ENCODE measurements at regions of chr6 and their contacts with region 1.

Region 1: DNA sequence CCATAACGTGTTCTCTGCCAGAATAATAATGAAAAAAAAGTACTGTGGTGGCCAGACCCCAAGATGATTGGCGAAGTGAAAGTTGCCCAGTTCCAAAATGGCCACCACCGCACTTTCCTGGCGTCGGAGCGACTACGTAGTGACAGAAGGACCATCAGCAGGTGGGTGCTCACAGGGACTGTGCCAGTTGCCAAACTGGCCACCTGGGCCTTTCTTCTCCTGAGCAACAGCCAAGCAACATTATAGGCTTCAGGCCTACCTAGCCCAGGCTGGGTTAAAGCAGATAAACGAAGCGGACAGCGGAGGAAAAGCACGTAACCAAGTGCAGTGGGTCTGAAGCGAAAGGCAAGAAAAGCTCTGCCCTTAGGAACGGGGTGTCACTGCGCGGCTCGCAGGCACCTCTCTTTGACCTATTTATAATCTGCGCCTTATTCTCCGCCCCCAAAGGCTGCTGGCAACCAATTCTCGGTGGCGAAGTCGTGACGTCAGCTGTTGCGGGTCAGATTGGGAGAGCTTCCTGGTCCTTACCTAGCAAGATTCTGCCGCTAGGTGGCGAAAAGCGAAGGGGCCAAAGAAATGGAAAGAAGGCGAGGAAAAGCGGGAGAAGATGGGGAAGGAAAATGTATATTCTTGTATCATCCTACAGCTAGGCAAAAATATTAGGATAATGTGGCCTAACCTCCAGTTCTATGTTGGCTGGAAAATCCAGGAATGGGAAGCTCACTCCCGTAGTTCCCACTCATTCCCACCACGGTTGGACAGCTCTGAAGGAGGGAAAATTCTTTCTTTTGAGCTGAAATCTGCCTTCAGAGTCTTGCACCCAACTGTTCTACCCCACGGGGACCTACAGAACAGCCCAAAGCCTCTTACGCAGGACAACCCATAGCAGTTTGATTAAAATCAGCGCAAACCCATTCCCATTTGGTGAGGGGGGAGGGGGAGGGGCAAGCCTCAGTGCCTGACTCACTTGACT is 6.9 kb upstream of the MOG start:
- DNase-seq: peak; percentile 94 to 99
- H3K4me3 ChIP-seq: peak overlapping the region; percentile 29 to 66 (median 56); a peak in 7 of 8 replicates
- H3K27ac ChIP-seq: peak overlapping the region; percentile 69; the same call in 1 of the 2 replicates
- H3K4me1 ChIP-seq: peaks cover 3 to 17% (median 10%) of the 10 kb centered on the region in 4 experiments; a peak in 6 of 7 replicates
- H3K27me3 ChIP-seq: no peaks in the 10 kb centered on the region
- CTCF ChIP-seq: peak; percentile 69 to 94 (median 74)
- EP300 ChIP-seq: no peak
- POLR2A ChIP-seq: peak in 1 of 2 experiments; percentile 93; a peak in 2 of 3 replicates
- RAD21 ChIP-seq: peak; percentile 52 to 53

Region 2: DNA sequence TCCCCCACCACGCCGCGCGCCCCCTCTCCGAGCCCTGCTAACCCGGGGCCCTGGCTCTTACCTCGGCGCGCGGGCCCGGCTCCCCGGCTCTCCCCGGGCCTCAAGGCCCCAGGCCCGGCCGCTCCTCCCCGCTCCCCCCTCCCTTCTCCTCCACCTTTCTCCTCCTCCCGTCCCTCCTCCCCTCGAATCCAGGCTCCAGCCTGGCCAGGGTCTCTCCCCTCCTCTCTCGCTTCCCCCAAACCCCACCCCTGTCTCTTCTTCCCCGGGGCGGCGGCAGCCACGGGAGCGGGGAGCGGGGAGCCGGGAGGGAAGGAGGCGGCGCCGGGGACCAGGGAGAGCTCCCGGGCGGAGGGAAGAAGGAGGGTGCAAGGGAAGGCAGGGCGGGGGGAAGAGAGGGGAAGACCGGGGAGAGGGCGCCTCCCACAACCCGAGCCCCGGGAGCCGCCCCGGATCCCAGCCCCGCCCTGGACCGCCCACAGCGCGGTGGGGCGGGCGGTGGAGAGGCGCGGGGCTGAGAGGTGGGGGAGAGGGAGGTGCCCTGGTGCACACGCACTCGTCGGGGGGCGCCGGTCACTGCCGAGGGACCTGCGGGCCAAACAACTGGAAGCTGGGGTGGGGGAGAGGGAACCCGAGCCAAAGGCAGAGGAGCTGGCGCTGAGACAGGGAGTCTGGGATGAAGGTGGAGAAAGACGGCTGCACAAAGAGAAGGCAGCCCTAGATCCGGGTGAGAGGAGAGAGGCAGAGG is 17.0 kb before region 1 on chr6 and contains the start of gene GABBR1:
- CTCF ChIA-PET with region 1: interaction called, 658 read pairs
- POLR2A ChIA-PET with region 1: interaction called, 14 read pairs
- DNase-seq: peak in 1 of 2 experiments; percentile 91
- H3K4me3 ChIP-seq: peak within 1 kb of the TSS; percentile 68 to 84 (median 76)
- H3K27ac ChIP-seq: peak within 1 kb of the TSS; percentile 53; the same call in 1 of the 2 replicates
- H3K4me1 ChIP-seq: peaks cover 4 to 23% (median 13%) of the 10 kb centered on the region in 4 experiments
- H3K27me3 ChIP-seq: no peaks in the 10 kb centered on the region
- CTCF ChIP-seq: no peak
- EP300 ChIP-seq: 0 out of 3 replicates have a peak, but pooled peaks of 1 of the 2 experiments have one; percentile 17
- POLR2A ChIP-seq: no peak; a peak in 1 of 3 replicates
- RAD21 ChIP-seq: no peak
- total RNA-seq, gene GABBR1: 67.8 and 75.9 TPM in 2 replicates

Region 3: GRCh38 chr6:29676981-29677601 is 27.1 kb after region 1 on chr6:
- CTCF ChIA-PET with region 1: interaction called, 502 read pairs
- POLR2A ChIA-PET with region 1: interaction called, 5 read pairs
- DNase-seq: no peak
- H3K4me3 ChIP-seq: no peak overlapping the region
- H3K27ac ChIP-seq: 0 out of 2 replicates have a peak overlapping the region, but pooled peaks have one; percentile 19
- H3K4me1 ChIP-seq: peaks cover 0 to 3% (median 0%) of the 10 kb centered on the region in 4 experiments; a peak in 1 of 7 replicates
- H3K27me3 ChIP-seq: no peaks in the 10 kb centered on the region
- CTCF ChIP-seq: no peak
- EP300 ChIP-seq: no peak
- POLR2A ChIP-seq: no peak
- RAD21 ChIP-seq: no peak

Region 4: DNA sequence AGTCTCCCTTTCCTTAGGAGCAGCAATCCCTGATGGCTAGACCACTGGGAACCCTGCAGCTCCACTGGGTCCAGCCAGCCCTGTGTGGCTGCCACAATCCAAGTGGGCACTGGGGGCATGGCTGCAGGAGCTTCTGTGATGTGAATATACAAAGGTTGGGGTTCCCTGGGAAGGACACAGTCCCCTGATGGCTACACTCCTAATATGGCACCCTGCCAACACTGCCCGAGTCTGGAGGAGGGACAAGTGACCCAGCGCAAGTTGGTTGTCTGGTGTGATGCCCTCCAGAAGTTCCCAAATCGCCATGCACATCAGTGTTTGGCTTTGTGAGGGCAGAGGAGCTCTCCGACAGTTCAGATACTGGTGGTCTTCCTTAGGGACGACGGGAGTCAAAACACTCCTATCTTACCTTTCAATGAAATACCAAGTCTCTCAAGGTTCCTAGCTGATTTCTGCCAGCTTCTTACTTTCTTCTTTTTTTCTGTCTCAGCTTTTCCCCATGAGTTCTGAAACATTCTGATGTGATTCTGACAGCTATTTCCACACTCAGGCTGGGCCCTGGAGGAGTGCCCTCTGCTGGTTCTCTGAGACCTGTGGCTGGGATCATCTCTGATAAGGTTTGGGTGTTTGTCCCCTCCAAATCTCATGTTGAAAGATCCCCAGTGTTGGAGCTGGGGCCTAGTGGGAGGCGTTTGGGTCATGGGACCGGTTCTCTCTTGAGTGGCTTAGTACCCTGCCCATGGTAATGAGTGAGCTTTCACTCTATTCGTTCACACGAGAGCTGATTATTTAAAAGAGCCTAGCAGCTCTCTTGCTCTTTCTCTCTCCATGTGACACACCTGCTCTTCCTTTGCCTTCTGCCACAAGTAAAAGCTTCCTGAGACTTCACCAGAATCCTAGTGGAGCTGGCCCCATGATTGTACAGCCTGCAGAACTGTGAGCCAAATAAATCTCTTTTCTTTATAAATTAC is 46.5 kb after region 1 on chr6:
- CTCF ChIA-PET with region 1: interaction called, 523 read pairs
- POLR2A ChIA-PET with region 1: interaction called, 12 read pairs
- DNase-seq: peak in 1 of 2 experiments; percentile 66
- H3K4me3 ChIP-seq: no peak overlapping the region
- H3K27ac ChIP-seq: no peak overlapping the region
- H3K4me1 ChIP-seq: peaks cover 0 to 3% (median 2%) of the 10 kb centered on the region in 4 experiments; a peak in 5 of 7 replicates
- H3K27me3 ChIP-seq: no peaks in the 10 kb centered on the region
- CTCF ChIP-seq: peak; percentile 66 to 80 (median 80)
- EP300 ChIP-seq: no peak
- POLR2A ChIP-seq: no peak
- RAD21 ChIP-seq: peak; percentile 45 to 69